Endothelial cell of umbilical vein (primary cell): ENCODE measurements at regions of chr2 and their contacts with region 1.

Region 1: GRCh38 chr2:26785431-26786206 is at the start of gene CENPA:
- DNase-seq: peak; percentile 100
- H3K4me3 ChIP-seq: peak within 1 kb of the TSS; percentile 63 to 96 (median 81)
- H3K27ac ChIP-seq: peak within 1 kb of the TSS; percentile 55
- H3K4me1 ChIP-seq: peaks cover 13% of the 10 kb centered on the region
- H3K27me3 ChIP-seq: no peaks in the 10 kb centered on the region
- CTCF ChIP-seq: peak in 1 of 2 donors; percentile 14
- POLR2A ChIP-seq: peak; percentile 57
- total RNA-seq, gene CENPA: 33.1 and 34.1 TPM in 2 replicates

Region 2: GRCh38 chr2:25606892-25607291 is 1178.7 kb before region 1 on chr2:
- CTCF ChIA-PET with region 1: no interaction called
- POLR2A ChIA-PET with region 1: no interaction called
- dilution Hi-C with region 1: no loop called
- intact Hi-C with region 1: no loop called
- DNase-seq: peak; percentile 55
- H3K4me3 ChIP-seq: no peak overlapping the region
- H3K27ac ChIP-seq: no peak overlapping the region
- H3K4me1 ChIP-seq: peaks cover 2% of the 10 kb centered on the region
- H3K27me3 ChIP-seq: no peaks in the 10 kb centered on the region
- CTCF ChIP-seq: peak; percentile 23 to 40
- POLR2A ChIP-seq: no peak

Region 3: GRCh38 chr2:26757873-26758789 is 27.5 kb before region 1 on chr2:
- CTCF ChIA-PET with region 1: no interaction called
- POLR2A ChIA-PET with region 1: no interaction called
- dilution Hi-C with region 1: no loop called
- intact Hi-C with region 1: loop called (anchors 1 kb)
- DNase-seq: peak; percentile 96
- H3K4me3 ChIP-seq: no peak overlapping the region
- H3K27ac ChIP-seq: peak overlapping the region; percentile 98
- H3K4me1 ChIP-seq: peaks cover 23% of the 10 kb centered on the region
- H3K27me3 ChIP-seq: no peaks in the 10 kb centered on the region
- CTCF ChIP-seq: no peak
- POLR2A ChIP-seq: peak; percentile 61

Region 4: DNA sequence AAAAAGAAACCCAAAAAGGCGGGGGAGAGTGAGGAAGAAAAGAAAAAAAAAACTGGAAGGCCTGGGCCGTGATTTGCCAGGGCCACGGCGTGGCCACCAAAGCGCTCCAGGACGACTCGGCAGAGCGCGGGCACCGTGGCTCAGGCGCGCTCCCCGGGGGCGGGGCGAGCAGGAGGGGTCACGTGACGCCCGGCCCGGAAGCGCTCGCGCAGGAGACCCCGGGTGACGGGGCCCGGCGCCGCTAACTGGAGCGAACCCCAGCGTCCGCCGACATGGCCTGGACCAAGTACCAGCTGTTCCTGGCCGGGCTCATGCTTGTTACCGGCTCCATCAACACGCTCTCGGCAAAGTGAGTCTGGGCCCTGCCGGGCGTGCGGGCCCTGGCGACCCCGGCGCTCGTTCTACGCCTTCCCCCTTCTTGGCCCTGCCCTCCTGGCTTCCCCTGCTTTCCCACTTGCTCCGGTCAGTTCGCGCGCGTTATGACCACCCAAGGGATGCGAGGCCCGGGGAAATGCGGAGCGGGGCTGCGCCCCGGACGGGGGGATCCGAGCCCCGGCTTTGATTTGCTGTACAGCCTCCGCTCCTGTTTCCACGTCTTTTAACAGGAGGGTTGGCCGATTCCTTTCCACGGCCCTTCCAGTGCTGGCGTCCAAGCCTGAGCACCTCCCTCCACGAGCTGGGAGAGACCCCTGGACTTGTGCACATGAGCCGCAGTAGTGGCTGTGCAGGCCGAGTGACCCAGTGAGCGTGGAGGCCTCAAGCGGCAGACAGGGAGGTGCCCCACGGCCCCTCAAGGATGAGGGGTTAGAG is 21.3 kb before region 1 on chr2 and contains the start of gene SLC35F6:
- CTCF ChIA-PET with region 1: interaction called, 6 read pairs
- POLR2A ChIA-PET with region 1: no interaction called
- dilution Hi-C with region 1: no loop called
- intact Hi-C with region 1: loop called (anchors 1 kb)
- DNase-seq: peak; percentile 82
- H3K4me3 ChIP-seq: peak within 1 kb of the TSS; percentile 82 to 90 (median 84)
- H3K27ac ChIP-seq: peak within 1 kb of the TSS; percentile 73
- H3K4me1 ChIP-seq: peaks cover 9% of the 10 kb centered on the region
- H3K27me3 ChIP-seq: no peaks in the 10 kb centered on the region
- CTCF ChIP-seq: no peak
- POLR2A ChIP-seq: peak; percentile 96
- total RNA-seq, gene SLC35F6: 36.6 and 39.8 TPM in 2 replicates

Region 5: DNA sequence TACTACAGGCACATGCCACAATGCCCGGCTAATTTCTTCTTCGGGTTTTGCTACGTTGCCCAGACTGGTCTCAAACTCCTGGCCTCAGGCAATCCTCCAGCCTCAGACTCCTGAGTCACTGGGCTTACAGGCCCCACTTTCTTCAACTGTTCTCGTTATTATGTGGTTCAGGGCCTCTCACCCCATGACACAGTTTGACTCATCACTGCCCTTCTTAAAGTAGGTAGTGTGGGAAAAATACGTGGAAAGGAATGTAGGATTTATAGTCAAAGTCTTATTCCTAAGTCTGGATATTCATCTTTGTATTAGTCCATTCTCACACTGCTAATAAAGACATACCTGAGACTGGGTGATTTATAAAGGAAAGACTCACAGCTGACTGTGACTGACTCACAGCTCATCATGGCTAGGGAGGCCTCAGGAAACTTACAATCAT is 19.6 kb after region 1 on chr2:
- CTCF ChIA-PET with region 1: no interaction called
- POLR2A ChIA-PET with region 1: no interaction called
- dilution Hi-C with region 1: no loop called
- intact Hi-C with region 1: no loop called
- DNase-seq: no peak
- H3K4me3 ChIP-seq: no peak overlapping the region
- H3K27ac ChIP-seq: no peak overlapping the region
- H3K4me1 ChIP-seq: no peaks in the 10 kb centered on the region
- H3K27me3 ChIP-seq: peaks cover 0 to 3% of the 10 kb centered on the region in 2 experiments
- CTCF ChIP-seq: no peak
- POLR2A ChIP-seq: no peak

Region 6: DNA sequence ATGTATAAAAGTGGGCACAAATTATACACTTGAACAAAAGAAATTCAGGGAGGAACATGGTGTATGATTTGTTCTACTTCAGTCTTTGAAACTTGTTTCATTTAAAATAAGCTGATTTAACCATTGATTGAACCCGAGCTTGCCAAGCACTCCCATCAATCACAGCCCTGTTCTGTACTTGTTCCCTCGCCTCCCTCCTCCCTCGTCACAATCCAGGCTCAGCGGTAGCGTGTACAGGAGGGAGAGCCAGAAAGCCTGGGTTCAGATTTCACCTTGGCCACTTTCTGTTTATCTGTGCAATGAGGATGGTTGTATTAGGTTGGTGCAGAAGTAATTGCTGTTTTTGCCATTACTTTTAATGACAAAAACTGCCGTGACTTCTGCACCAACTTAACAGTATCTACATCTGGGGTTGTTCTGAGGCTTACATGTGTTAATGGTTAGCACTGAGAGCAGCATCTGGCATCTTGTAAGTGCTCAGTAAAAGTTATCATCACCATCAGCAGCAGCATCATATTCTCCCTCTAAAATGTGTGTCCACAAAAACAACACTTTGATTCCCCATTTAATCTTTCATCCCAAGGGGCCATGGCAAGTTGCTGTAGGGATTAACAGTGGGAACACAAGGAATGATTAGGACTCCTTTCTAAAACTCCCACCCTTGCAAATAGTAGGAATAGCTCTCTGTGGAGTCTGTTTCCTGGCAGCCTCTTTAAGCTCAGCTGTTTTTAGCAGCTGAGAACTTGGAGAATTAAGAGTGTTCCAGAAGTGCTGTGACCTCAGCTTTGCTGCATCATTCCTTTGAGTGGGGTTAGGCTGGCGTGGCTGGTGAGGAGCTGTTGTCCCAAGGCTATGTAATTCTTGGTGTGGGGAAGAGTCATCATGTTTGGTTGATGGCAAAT is 67.0 kb after region 1 on chr2:
- CTCF ChIA-PET with region 1: no interaction called
- POLR2A ChIA-PET with region 1: no interaction called
- dilution Hi-C with region 1: no loop called
- intact Hi-C with region 1: no loop called
- DNase-seq: no peak
- H3K4me3 ChIP-seq: no peak overlapping the region
- H3K27ac ChIP-seq: no peak overlapping the region
- H3K4me1 ChIP-seq: peaks cover 4% of the 10 kb centered on the region
- H3K27me3 ChIP-seq: peaks cover 45 to 59% of the 10 kb centered on the region in 2 experiments
- CTCF ChIP-seq: no peak
- POLR2A ChIP-seq: no peak

Region 7: DNA sequence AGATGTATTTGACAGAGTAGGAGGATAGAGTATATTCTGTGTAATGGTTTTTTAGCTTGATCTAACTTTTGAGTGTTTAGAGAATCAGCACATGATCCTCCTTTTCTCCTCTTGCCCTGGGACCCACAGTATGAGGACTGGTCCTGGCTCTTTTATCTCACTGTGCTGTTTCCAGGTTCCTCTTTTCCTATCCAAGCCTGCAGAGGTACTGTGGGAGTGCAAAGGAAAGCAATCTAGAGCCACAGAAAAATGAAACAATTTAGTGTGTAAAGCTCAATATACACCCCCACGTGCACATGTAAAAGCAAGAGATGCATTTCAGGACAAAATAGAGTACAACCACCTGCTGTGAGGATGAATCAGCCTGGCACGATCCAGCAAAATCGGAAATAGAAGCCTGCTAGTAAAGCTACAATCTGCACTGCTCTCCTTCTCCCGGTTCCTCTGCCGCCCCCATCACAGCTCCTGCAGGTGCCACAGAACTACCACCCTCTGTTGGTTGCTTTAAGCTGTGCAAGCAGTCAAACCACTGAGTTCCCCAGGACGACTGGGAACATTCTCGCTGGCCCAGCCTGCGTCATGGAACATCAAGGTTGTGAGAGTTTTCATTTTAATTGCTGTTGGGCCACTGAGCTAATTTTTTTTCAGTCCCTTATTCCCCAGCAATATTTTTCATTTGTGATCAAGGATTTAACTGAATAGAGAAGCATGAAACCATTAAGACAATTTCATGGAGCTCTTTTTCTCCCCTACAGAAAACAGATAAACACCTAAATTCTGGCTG is 137.0 kb after region 1 on chr2:
- CTCF ChIA-PET with region 1: no interaction called
- POLR2A ChIA-PET with region 1: no interaction called
- dilution Hi-C with region 1: no loop called
- intact Hi-C with region 1: no loop called
- DNase-seq: peak; percentile 33
- H3K4me3 ChIP-seq: no peak overlapping the region
- H3K27ac ChIP-seq: no peak overlapping the region
- H3K4me1 ChIP-seq: no peaks in the 10 kb centered on the region
- H3K27me3 ChIP-seq: peaks cover 2 to 5% of the 10 kb centered on the region in 2 experiments
- CTCF ChIP-seq: peak; percentile 24 to 63
- POLR2A ChIP-seq: no peak